ENCODE measurements at regions of chr15 and their contacts with region 1.

Region 1: GRCh38 chr15:60362321-60363086 is 35.3 kb downstream of the ANXA2 start:
- DNase-seq: peak; percentile 74
- ATAC-seq: peak; percentile 97
- H3K4me3 Mint-ChIP-seq: no peak overlapping the region
- H3K27ac Mint-ChIP-seq: peak overlapping the region; percentile 53
- H3K4me1 Mint-ChIP-seq: peaks cover 18% of the 10 kb centered on the region
- H3K27me3 Mint-ChIP-seq: no peaks in the 10 kb centered on the region

Region 2: GRCh38 chr15:60397772-60398445 is 35.4 kb after region 1 on chr15 and contains the start of gene ANXA2:
- CTCF ChIA-PET with region 1: interaction called, 8 read pairs
- POLR2A ChIA-PET with region 1: interaction called, 6 read pairs
- intact Hi-C with region 1: loop called in 1 of 2 experiments (anchors 2 kb)
- DNase-seq: peak; percentile 91
- ATAC-seq: peak; percentile 74
- H3K4me3 Mint-ChIP-seq: peak within 1 kb of the TSS; percentile 83
- H3K27ac Mint-ChIP-seq: peak within 1 kb of the TSS; percentile 89
- H3K4me1 Mint-ChIP-seq: peaks cover 36% of the 10 kb centered on the region
- H3K27me3 Mint-ChIP-seq: peaks cover 4% of the 10 kb centered on the region
- total RNA-seq, gene ANXA2: 65.9 to 80.2 TPM

Region 3: GRCh38 chr15:60478566-60479360 is 116.3 kb after region 1 on chr15 and contains the start of gene ICE2:
- CTCF ChIA-PET with region 1: interaction called, 5 read pairs
- POLR2A ChIA-PET with region 1: interaction called, 3 read pairs
- intact Hi-C with region 1: loop called in 1 of 2 experiments (anchors 2 kb)
- DNase-seq: peak; percentile 98
- ATAC-seq: peak; percentile 93
- H3K4me3 Mint-ChIP-seq: peak within 1 kb of the TSS; percentile 91
- H3K27ac Mint-ChIP-seq: peak within 1 kb of the TSS; percentile 98
- H3K4me1 Mint-ChIP-seq: peaks cover 55% of the 10 kb centered on the region
- H3K27me3 Mint-ChIP-seq: no peaks in the 10 kb centered on the region
- total RNA-seq, gene ICE2: 72.8 to 81.6 TPM

Region 4: GRCh38 chr15:60798821-60799220 is 436.3 kb after region 1 on chr15:
- CTCF ChIA-PET with region 1: no interaction called
- POLR2A ChIA-PET with region 1: no interaction called
- intact Hi-C with region 1: no loop called
- DNase-seq: peak; percentile 81
- ATAC-seq: peak; percentile 80
- H3K4me3 Mint-ChIP-seq: no peak overlapping the region
- H3K27ac Mint-ChIP-seq: peak overlapping the region; percentile 95
- H3K4me1 Mint-ChIP-seq: peaks cover 85% of the 10 kb centered on the region
- H3K27me3 Mint-ChIP-seq: no peaks in the 10 kb centered on the region

Region 5: GRCh38 chr15:60932051-60932915 is 569.8 kb after region 1 on chr15:
- CTCF ChIA-PET with region 1: interaction called, 8 read pairs
- POLR2A ChIA-PET with region 1: interaction called, 3 read pairs
- intact Hi-C with region 1: loop called (anchors 1 to 2 kb)
- DNase-seq: peak; percentile 79
- ATAC-seq: peak; percentile 95
- H3K4me3 Mint-ChIP-seq: no peak overlapping the region
- H3K27ac Mint-ChIP-seq: no peak overlapping the region
- H3K4me1 Mint-ChIP-seq: peaks cover 11% of the 10 kb centered on the region
- H3K27me3 Mint-ChIP-seq: peaks cover 6% of the 10 kb centered on the region

Measured in activated CD4-positive, alpha-beta T cell treated with anti-CD3 and anti-CD28 coated beads for 36 hours (primary cell).